Sciatic nerve (tissue), 2 donors: ENCODE measurements at regions of chr6 and their contacts with region 1.

Region 1: GRCh38 chr6:86558318-86558717 is 379.0 kb upstream of the HTR1E start:
- DNase-seq: no peak
- ATAC-seq: no peak

Region 2: GRCh38 chr6:84872996-84873723 is 1685.2 kb before region 1 on chr6:
- intact Hi-C with region 1: loop called (anchors 5 kb)
- DNase-seq: no peak
- ATAC-seq: no peak

Region 3: GRCh38 chr6:86526238-86526637 is 32.1 kb before region 1 on chr6:
- intact Hi-C with region 1: no loop called
- DNase-seq: no peak
- ATAC-seq: no peak

Region 4: GRCh38 chr6:86629123-86629522 is 70.8 kb after region 1 on chr6:
- intact Hi-C with region 1: no loop called
- DNase-seq: no peak
- ATAC-seq: no peak